Activated CD4-positive, alpha-beta T cell treated with anti-CD3 and anti-CD28 coated beads for 36 hours (primary cell): ENCODE measurements at regions of chr2 and their contacts with region 1.

Region 1: GRCh38 chr2:84314901-84315330 is 144.2 kb downstream of the SUCLG1 start:
- DNase-seq: peak; percentile 89
- ATAC-seq: peak; percentile 90
- H3K4me3 Mint-ChIP-seq: no peak overlapping the region
- H3K27ac Mint-ChIP-seq: no peak overlapping the region
- H3K4me1 Mint-ChIP-seq: no peaks in the 10 kb centered on the region
- H3K27me3 Mint-ChIP-seq: peaks cover 2% of the 10 kb centered on the region

Region 2: DNA sequence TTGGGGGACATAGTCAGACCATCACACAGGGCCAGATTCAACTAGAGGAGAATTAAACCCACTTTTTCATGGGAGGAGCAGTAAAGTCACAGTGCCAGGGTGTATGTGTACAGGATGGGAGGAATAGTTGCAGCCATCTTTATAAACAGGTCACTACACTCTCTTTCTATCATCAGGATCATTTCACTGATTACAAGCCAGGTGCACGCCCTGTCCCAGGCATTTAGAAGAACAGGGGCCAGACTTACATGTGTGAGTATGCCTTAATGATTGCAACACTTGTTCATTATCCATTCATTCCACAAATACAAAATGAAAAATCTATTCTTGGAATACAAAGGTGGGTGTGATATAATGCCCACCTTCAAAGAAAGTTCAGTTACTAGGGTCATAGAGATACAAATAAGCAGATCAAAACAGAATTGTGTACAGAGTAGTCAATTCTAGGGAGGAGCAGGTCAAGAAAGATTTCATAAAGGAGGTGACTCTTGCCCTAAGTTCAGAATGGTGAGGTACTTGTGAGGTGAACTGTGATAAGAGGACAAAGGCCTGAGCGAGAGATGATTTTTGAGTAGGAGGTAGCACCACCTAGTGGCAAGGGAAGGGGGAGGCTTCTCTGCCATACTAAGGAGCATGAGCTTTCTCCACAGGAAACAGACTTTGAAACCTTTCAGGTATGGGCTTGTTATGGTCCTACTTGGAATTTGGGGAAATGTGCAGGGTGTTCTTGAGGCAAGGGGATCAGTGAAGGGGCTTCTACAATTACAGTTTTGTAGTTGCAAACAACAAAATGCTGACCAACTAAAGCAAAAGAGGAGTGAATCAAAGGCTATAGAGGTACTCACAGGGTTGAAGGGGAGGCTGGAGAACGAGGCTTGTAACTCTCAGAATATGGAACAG is 12.2 kb before region 1 on chr2:
- CTCF ChIA-PET with region 1: interaction called, 26 read pairs
- POLR2A ChIA-PET with region 1: no interaction called
- intact Hi-C with region 1: no loop called
- DNase-seq: peak; percentile 59
- ATAC-seq: peak; percentile 81
- H3K4me3 Mint-ChIP-seq: no peak overlapping the region
- H3K27ac Mint-ChIP-seq: no peak overlapping the region
- H3K4me1 Mint-ChIP-seq: no peaks in the 10 kb centered on the region
- H3K27me3 Mint-ChIP-seq: peaks cover 9% of the 10 kb centered on the region